ENCODE measurements at regions of chr1 and their contacts with region 1.

Region 1: GRCh38 chr1:244435562-244436205 is 16.0 kb downstream of the ADSS2 start:
- DNase-seq: no peak
- H3K4me3 ChIP-seq: no peak overlapping the region
- H3K27ac ChIP-seq: no peak overlapping the region
- H3K4me1 ChIP-seq: no peaks in the 10 kb centered on the region
- CTCF ChIP-seq: no peak

Region 2: GRCh38 chr1:243264717-243265116 is 1171.0 kb before region 1 on chr1:
- CTCF ChIA-PET with region 1: no interaction called
- POLR2A ChIA-PET with region 1: no interaction called
- intact Hi-C with region 1: loop called (anchors 5 kb)
- DNase-seq: no peak
- H3K4me3 ChIP-seq: no peak overlapping the region
- H3K27ac ChIP-seq: no peak overlapping the region
- H3K4me1 ChIP-seq: peaks cover 25% of the 10 kb centered on the region
- CTCF ChIP-seq: no peak

Region 3: DNA sequence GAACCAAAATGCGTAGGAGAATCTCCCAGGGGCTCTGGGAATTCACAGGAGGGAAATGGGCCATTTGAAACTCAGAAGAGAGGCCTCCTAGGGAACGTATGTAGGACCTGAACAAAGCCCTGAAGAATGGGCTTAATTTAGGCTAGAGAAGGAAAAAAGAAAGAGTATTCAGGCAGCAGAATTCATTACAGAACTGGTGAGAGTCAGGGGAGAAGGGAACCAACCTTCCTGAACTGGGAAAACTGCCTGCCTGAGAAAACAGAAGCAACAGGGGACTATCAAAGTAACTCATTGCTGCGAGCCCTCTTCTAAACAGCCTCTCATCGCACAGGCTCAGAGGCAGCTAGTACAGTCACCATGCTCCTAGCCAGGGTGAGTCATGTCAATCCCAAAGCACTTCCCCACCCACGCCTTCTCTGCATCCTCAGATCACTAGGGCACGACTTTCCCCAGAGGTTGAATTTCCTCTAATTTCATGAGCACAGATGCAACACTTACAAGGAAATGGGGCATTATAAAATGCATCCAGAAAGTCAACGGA is 82.1 kb before region 1 on chr1:
- CTCF ChIA-PET with region 1: no interaction called
- POLR2A ChIA-PET with region 1: no interaction called
- intact Hi-C with region 1: no loop called
- DNase-seq: no peak
- H3K4me3 ChIP-seq: no peak overlapping the region
- H3K27ac ChIP-seq: no peak overlapping the region
- H3K4me1 ChIP-seq: no peaks in the 10 kb centered on the region
- CTCF ChIP-seq: no peak

Measured in OCI-LY7 (cell line).